Lower lobe of right lung (tissue), 2 donors: ENCODE measurements at regions of chr18 and their contacts with region 1.

Region 1: GRCh38 chr18:76697441-76697901 is 124.9 kb upstream of the ZNF236 start:
- DNase-seq: no peak
- ATAC-seq: peak; percentile 40 to 70
- H3K4me3 ChIP-seq: peak overlapping the region; percentile 24
- H3K27ac ChIP-seq: no peak overlapping the region
- H3K4me1 ChIP-seq: no peaks in the 10 kb centered on the region
- H3K27me3 ChIP-seq: peaks cover 10% of the 10 kb centered on the region
- CTCF ChIP-seq: no peak

Region 2: GRCh38 chr18:76410660-76411417 is 286.6 kb before region 1 on chr18:
- intact Hi-C with region 1: loop called (anchors 10 kb)
- DNase-seq: no peak
- ATAC-seq: no peak
- H3K4me3 ChIP-seq: no peak overlapping the region
- H3K27ac ChIP-seq: no peak overlapping the region
- H3K4me1 ChIP-seq: peaks cover 33% of the 10 kb centered on the region
- H3K27me3 ChIP-seq: no peaks in the 10 kb centered on the region
- CTCF ChIP-seq: no peak